HEK293 (cell line): ENCODE measurements at regions of chr12 and their contacts with region 1.

Region 1: GRCh38 chr12:3275171-3276041 is 198.2 kb downstream of the TSPAN9 start:
- H3K4me3 ChIP-seq: no peak overlapping the region
- H3K27ac ChIP-seq: no peak overlapping the region
- H3K4me1 ChIP-seq: no peaks in the 10 kb centered on the region
- CTCF ChIP-seq: peak; percentile 86

Region 2: DNA sequence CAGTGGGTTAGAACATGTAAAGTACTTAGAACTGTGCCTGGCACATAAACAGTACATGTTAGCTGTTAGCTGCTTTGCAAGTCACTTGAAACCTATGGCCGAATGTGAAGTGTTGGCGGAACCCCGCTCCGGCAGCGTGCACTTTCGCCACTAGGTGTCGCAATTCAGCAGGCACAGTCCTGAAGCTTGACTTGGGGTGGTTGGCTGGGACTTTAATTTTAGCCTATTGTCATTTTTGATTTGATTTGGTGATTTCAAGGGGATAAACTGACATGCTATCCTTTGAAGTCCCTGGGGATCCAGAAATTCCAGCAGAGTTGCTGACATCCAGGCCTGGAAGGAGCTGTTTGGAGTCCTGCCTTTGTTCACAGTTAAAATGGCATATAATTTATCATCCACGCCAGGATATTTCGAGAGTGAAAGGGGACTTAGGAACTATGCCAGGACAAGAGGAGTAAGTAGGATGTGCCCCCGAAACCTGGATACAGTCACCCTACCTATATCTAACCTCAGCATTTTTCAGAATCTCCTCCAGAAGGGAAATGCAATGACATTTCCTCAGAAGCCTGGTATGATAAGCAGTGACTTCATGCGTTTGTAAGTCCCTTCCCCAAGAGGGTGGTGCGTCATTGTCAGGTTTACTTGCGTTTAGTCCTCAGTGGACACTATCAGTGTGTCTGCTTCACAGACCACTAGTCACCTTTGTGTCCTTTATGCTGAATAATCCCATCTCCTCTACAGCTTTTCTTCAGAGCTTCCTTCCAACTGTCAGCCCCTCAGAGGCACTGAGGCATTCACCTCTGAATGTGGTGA is 201.8 kb before region 1 on chr12:
- CTCF ChIA-PET with region 1: interaction called, 66 read pairs
- POLR2A ChIA-PET with region 1: no interaction called
- H3K4me3 ChIP-seq: no peak overlapping the region
- H3K27ac ChIP-seq: no peak overlapping the region
- H3K4me1 ChIP-seq: peaks cover 2% of the 10 kb centered on the region; the same call in 1 of the 2 replicates
- CTCF ChIP-seq: peak; percentile 87

Region 3: GRCh38 chr12:3135522-3136461 is 139.6 kb before region 1 on chr12:
- CTCF ChIA-PET with region 1: interaction called, 148 read pairs
- POLR2A ChIA-PET with region 1: no interaction called
- H3K4me3 ChIP-seq: no peak overlapping the region
- H3K27ac ChIP-seq: no peak overlapping the region
- H3K4me1 ChIP-seq: no peaks in the 10 kb centered on the region
- CTCF ChIP-seq: peak; percentile 75

Region 4: DNA sequence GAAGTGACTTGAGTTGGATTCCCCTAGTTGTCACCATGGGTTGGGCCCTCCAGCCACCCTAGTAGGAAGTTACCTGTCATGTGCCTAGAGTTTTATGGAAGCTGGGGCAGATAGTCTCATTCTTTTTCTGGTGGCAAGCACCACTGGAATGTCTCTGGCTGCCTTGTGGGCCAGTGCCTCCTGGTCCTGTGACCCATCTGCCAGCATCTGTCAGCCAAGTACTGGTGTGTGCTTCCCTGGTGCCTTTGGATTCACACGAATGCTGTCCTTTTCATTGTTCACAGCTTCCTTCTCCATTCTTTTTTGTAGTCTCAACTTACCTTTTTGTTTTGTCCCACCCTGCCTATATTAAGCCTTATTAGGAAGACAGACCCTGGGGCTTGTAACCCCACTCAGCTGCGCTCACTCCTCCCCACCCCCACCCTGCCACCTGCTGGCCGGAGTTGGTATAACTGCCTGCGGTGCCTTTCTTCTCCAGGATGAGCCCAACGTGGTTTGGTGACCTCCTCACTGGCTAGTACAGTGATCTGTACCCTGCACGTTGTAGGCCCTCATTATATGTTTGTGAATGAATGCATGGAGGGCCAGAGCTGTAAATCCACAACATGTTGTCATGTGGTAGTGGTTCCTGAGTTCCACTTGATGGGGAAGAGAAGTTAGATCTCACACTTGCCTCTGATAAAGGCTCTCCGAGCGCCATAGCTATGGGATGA is 72.5 kb before region 1 on chr12:
- CTCF ChIA-PET with region 1: interaction called, 21 read pairs
- POLR2A ChIA-PET with region 1: no interaction called
- H3K4me3 ChIP-seq: no peak overlapping the region
- H3K27ac ChIP-seq: no peak overlapping the region
- H3K4me1 ChIP-seq: no peaks in the 10 kb centered on the region; the same call in 1 of the 2 replicates
- CTCF ChIP-seq: peak; percentile 81

Region 5: GRCh38 chr12:3265406-3265805 is 10.0 kb before region 1 on chr12:
- CTCF ChIA-PET with region 1: interaction called, 11 read pairs
- POLR2A ChIA-PET with region 1: no interaction called
- H3K4me3 ChIP-seq: no peak overlapping the region
- H3K27ac ChIP-seq: no peak overlapping the region
- H3K4me1 ChIP-seq: no peaks in the 10 kb centered on the region
- CTCF ChIP-seq: no peak

Region 6: GRCh38 chr12:3336606-3337311 is 61.4 kb after region 1 on chr12:
- CTCF ChIA-PET with region 1: no interaction called
- POLR2A ChIA-PET with region 1: no interaction called
- H3K4me3 ChIP-seq: no peak overlapping the region
- H3K27ac ChIP-seq: no peak overlapping the region
- H3K4me1 ChIP-seq: no peaks in the 10 kb centered on the region
- CTCF ChIP-seq: no peak

Region 7: GRCh38 chr12:3432176-3432742 is 156.9 kb after region 1 on chr12:
- CTCF ChIA-PET with region 1: no interaction called
- POLR2A ChIA-PET with region 1: no interaction called
- H3K4me3 ChIP-seq: no peak overlapping the region
- H3K27ac ChIP-seq: no peak overlapping the region
- H3K4me1 ChIP-seq: no peaks in the 10 kb centered on the region
- CTCF ChIP-seq: no peak